ENCODE measurements at regions of chr12 and their contacts with region 1.

Region 1: GRCh38 chr12:26523708-26524150 is 309.3 kb downstream of the ITPR2 start:
- DNase-seq: peak; percentile 90
- ATAC-seq: peak; percentile 98

Region 2: GRCh38 chr12:26119391-26119981 is 404.2 kb before region 1 on chr12:
- intact Hi-C with region 1: loop called (anchors 5 kb)
- DNase-seq: no peak
- ATAC-seq: no peak